Naive thymus-derived CD8-positive, alpha-beta T cell (primary cell): ENCODE measurements at regions of chr20 and their contacts with region 1.

Region 1: GRCh38 chr20:48718857-48719578 is 108.8 kb downstream of the PREX1 start:
- DNase-seq: peak in 6 of 10 donors; percentile 27 to 67 (median 40)
- ATAC-seq: peak; percentile 36 to 42
- H3K4me3 Mint-ChIP-seq: peak overlapping the region; percentile 44 to 85 (median 74)
- H3K27ac Mint-ChIP-seq: peak overlapping the region; percentile 79 to 99 (median 91)
- H3K4me1 Mint-ChIP-seq: peaks cover 59 to 100% (median 98%) of the 10 kb centered on the region in 4 donors
- H3K27me3 Mint-ChIP-seq: no peaks in the 10 kb centered on the region

Region 2: GRCh38 chr20:48750947-48751635 is 32.1 kb after region 1 on chr20:
- POLR2A ChIA-PET with region 1: interaction called, 12 read pairs
- DNase-seq: peak in 6 of 10 donors; percentile 30 to 54 (median 48)
- ATAC-seq: peak; percentile 88 to 93
- H3K4me3 Mint-ChIP-seq: peak overlapping the region; percentile 57 to 85 (median 72)
- H3K27ac Mint-ChIP-seq: peak overlapping the region; percentile 76 to 96 (median 92)
- H3K4me1 Mint-ChIP-seq: peaks cover 39 to 88% (median 79%) of the 10 kb centered on the region in 4 donors
- H3K27me3 Mint-ChIP-seq: no peaks in the 10 kb centered on the region